Activated CD4-positive, alpha-beta T cell treated with anti-CD3 and anti-CD28 coated beads for 36 hours (primary cell): ENCODE measurements at regions of chr1 and their contacts with region 1.

Region 1: GRCh38 chr1:95072532-95073419 is at the start of gene ALG14:
- DNase-seq: peak; percentile 95
- ATAC-seq: peak; percentile 97
- H3K4me3 Mint-ChIP-seq: peak within 1 kb of the TSS; percentile 91
- H3K27ac Mint-ChIP-seq: peak within 1 kb of the TSS; percentile 98
- H3K4me1 Mint-ChIP-seq: peaks cover 17% of the 10 kb centered on the region
- H3K27me3 Mint-ChIP-seq: peaks cover 2% of the 10 kb centered on the region
- total RNA-seq, gene ALG14: 5.3 to 7.3 TPM

Region 2: GRCh38 chr1:94541175-94542087 is 531.3 kb before region 1 on chr1 and contains the start of gene F3:
- CTCF ChIA-PET with region 1: no interaction called
- POLR2A ChIA-PET with region 1: no interaction called
- intact Hi-C with region 1: loop called in 1 of 2 experiments (anchors 10 kb)
- DNase-seq: peak; percentile 90
- ATAC-seq: peak; percentile 98
- H3K4me3 Mint-ChIP-seq: peak within 1 kb of the TSS; percentile 68
- H3K27ac Mint-ChIP-seq: no peak within 1 kb of the TSS
- H3K4me1 Mint-ChIP-seq: peaks cover 13% of the 10 kb centered on the region
- H3K27me3 Mint-ChIP-seq: peaks cover 64% of the 10 kb centered on the region
- total RNA-seq, gene F3: 0.07 TPM in 1 of 2 experiments, not detected in the other

Region 3: DNA sequence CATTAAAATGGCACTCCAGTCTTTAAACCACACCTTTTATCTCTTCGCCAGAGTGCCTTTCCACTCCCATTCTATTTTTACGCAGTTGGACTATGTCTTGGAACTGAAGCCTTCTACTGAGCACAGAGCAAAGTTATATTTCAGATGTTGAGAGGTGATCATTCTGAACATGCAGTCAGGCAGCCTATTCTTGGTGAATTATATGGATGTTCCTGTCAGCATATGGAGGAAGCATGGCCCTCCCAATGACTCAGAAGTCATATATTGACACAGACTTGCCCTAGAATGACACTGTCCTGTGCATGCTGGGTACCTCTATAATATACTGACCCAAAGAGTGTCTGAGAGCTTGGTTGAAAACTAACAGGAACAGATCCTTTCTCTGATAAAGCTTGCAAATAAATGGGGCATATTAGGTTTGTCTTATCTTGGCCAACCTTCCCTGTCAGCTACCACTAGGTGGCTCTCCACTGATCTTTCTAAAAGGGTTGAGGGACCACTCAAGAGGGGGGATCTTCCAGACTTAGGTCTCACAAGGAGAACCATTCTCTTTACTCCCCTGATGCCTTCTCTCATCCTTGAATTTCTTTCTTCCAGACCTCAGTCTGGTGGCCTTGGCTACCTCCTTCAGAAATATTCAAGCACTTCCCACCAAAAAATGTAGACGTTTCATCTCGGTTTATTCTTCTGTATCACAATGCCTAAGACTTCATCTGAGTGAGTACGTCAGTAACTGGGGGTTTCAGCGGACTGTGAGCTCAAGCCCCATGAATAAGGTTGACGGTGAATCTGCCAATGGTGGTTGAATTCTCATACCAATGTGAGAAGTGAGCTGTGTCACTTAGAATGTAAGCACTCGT is 11.8 kb after region 1 on chr1:
- CTCF ChIA-PET with region 1: interaction called, 12 read pairs
- POLR2A ChIA-PET with region 1: no interaction called
- intact Hi-C with region 1: no loop called
- DNase-seq: peak; percentile 30
- ATAC-seq: peak; percentile 63
- H3K4me3 Mint-ChIP-seq: no peak overlapping the region
- H3K27ac Mint-ChIP-seq: no peak overlapping the region
- H3K4me1 Mint-ChIP-seq: no peaks in the 10 kb centered on the region
- H3K27me3 Mint-ChIP-seq: peaks cover 10% of the 10 kb centered on the region

Region 4: GRCh38 chr1:95116580-95117206 is 43.9 kb after region 1 on chr1:
- CTCF ChIA-PET with region 1: interaction called, 6 read pairs
- POLR2A ChIA-PET with region 1: no interaction called
- intact Hi-C with region 1: loop called (anchors 1 to 5 kb)
- DNase-seq: peak; percentile 74
- ATAC-seq: peak; percentile 71
- H3K4me3 Mint-ChIP-seq: peak overlapping the region; percentile 76
- H3K27ac Mint-ChIP-seq: peak overlapping the region; percentile 69
- H3K4me1 Mint-ChIP-seq: peaks cover 8% of the 10 kb centered on the region
- H3K27me3 Mint-ChIP-seq: peaks cover 44% of the 10 kb centered on the region